ENCODE measurements at regions of chr9 and their contacts with region 1.

Region 1: DNA sequence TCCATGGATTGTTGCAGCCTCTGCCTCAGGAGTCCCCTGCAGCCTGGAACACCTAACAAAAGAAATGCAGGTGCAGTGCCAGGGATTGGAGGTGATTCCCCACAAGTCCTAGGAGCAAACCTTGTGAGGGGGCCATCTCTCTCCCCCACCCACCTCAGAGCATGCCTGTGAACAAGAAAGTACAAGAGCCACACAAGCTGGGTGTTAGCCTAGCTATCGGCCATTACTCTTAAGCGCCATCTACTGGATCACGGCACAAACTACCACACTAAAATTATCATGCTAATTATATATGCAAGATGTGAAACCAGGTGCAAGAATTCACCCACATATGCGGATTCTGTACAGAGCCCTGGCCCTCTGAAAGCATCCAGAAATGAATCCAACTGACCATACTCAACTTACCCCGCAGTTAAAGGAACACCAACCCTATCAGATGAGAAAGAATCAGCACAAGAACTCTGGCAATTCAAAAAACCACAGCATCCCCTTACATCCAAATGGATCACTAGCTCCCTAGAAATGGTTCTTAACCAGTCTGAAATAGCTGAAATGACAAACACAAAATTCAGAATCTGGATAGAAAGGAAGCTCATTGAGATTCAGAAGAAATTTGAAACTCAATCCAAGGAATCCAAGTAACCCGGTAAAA is 16.5 kb upstream of the PRSS3 start:
- DNase-seq: no peak
- H3K4me3 ChIP-seq: no peak overlapping the region
- H3K27me3 ChIP-seq: no peaks in the 10 kb centered on the region
- CTCF ChIP-seq: peak; percentile 86

Region 2: DNA sequence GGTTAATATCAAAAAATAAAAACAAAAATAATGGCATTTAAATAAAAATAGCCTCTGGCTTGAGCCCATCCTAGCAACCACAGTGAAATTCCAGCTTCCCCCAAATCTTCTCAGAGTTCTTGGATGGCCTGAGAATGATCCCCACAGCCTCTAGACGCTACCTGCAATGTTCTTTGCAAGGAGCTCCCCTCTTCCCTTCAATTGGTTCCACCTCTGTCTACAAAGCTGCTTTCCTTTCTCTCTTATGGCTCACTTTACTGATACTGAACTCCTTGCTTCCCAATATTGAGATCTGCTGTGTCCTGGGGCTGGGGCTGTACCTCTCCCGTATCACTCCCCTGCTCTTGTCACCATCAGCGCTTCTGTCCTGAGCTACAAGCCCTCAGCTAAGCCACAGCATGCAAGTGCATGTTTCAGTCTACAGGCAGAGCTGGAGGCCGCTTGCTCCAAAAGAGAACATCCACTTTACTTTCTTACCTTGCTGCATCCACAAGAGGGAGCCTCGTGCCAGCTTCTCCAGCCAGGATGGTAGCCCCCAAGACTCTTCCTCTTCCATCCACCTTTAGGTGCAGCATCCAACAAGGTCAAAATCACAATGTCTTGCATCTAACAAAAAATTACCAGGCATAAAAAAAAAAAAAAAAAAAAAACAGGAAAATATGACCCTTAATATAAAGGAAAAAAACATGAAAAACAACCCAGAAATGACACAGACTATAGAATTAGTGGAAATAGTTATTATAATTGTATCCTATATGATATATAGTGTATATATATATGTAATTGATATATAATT is 40.8 kb before region 1 on chr9:
- CTCF ChIA-PET with region 1: interaction called, 48 read pairs
- POLR2A ChIA-PET with region 1: no interaction called
- DNase-seq: no peak
- H3K4me3 ChIP-seq: no peak overlapping the region
- H3K27me3 ChIP-seq: no peaks in the 10 kb centered on the region; the same call in 1 of the 2 replicates
- CTCF ChIP-seq: peak; percentile 89

Region 3: GRCh38 chr9:33762343-33762742 is 16.5 kb before region 1 on chr9:
- CTCF ChIA-PET with region 1: interaction called, 10 read pairs
- POLR2A ChIA-PET with region 1: no interaction called
- DNase-seq: no peak
- H3K4me3 ChIP-seq: no peak overlapping the region
- H3K27me3 ChIP-seq: no peaks in the 10 kb centered on the region
- CTCF ChIP-seq: no peak

Region 4: GRCh38 chr9:33800886-33801285 is 22.1 kb after region 1 on chr9:
- CTCF ChIA-PET with region 1: interaction called, 12 read pairs
- POLR2A ChIA-PET with region 1: no interaction called
- DNase-seq: no peak
- H3K4me3 ChIP-seq: no peak overlapping the region
- H3K27me3 ChIP-seq: no peaks in the 10 kb centered on the region; the same call in 1 of the 2 replicates
- CTCF ChIP-seq: no peak